ENCODE measurements at regions of chr1 and their contacts with region 1.

Region 1: GRCh38 chr1:48202030-48202752 is 20.3 kb upstream of the SLC5A9 start:
- DNase-seq: peak; percentile 97
- H3K4me3 ChIP-seq: no peak overlapping the region
- H3K27ac ChIP-seq: no peak overlapping the region
- H3K4me1 ChIP-seq: peaks cover 15% of the 10 kb centered on the region
- H3K27me3 ChIP-seq: peaks cover 2% of the 10 kb centered on the region
- CTCF ChIP-seq: peak; percentile 82 to 91

Region 2: GRCh38 chr1:47755101-47755990 is 446.8 kb before region 1 on chr1:
- CTCF ChIA-PET with region 1: no interaction called
- dilution Hi-C with region 1: no loop called
- in situ Hi-C with region 1: loop called in 1 of 2 experiments (anchors 25 kb)
- intact Hi-C with region 1: no loop called
- DNase-seq: no peak
- H3K4me3 ChIP-seq: no peak overlapping the region
- H3K27ac ChIP-seq: no peak overlapping the region
- H3K4me1 ChIP-seq: peaks cover 4% of the 10 kb centered on the region
- H3K27me3 ChIP-seq: no peaks in the 10 kb centered on the region
- CTCF ChIP-seq: peak; percentile 55 to 64

Region 3: GRCh38 chr1:47997289-47998200 is 204.6 kb before region 1 on chr1 and contains the start of gene TRABD2B:
- CTCF ChIA-PET with region 1: no interaction called
- dilution Hi-C with region 1: no loop called
- in situ Hi-C with region 1: no loop called
- intact Hi-C with region 1: loop called (anchors 2 kb)
- DNase-seq: peak; percentile 69
- H3K4me3 ChIP-seq: peak within 1 kb of the TSS; percentile 57 to 75 (median 69)
- H3K27ac ChIP-seq: no peak within 1 kb of the TSS
- H3K4me1 ChIP-seq: peaks cover 23% of the 10 kb centered on the region
- H3K27me3 ChIP-seq: no peaks in the 10 kb centered on the region
- CTCF ChIP-seq: peak; percentile 55 to 96
- total RNA-seq, gene TRABD2B: 1.2 TPM

Region 4: GRCh38 chr1:48082271-48082962 is 119.8 kb before region 1 on chr1:
- CTCF ChIA-PET with region 1: no interaction called
- dilution Hi-C with region 1: no loop called
- in situ Hi-C with region 1: no loop called
- intact Hi-C with region 1: no loop called
- DNase-seq: no peak
- H3K4me3 ChIP-seq: no peak overlapping the region
- H3K27ac ChIP-seq: no peak overlapping the region
- H3K4me1 ChIP-seq: no peaks in the 10 kb centered on the region
- H3K27me3 ChIP-seq: no peaks in the 10 kb centered on the region
- CTCF ChIP-seq: no peak

Region 5: GRCh38 chr1:48109390-48110013 is 92.7 kb before region 1 on chr1:
- CTCF ChIA-PET with region 1: interaction called, 5 read pairs
- dilution Hi-C with region 1: no loop called
- in situ Hi-C with region 1: loop called (anchors 5 kb)
- intact Hi-C with region 1: loop called (anchors 1 kb)
- DNase-seq: peak; percentile 54
- H3K4me3 ChIP-seq: no peak overlapping the region
- H3K27ac ChIP-seq: no peak overlapping the region
- H3K4me1 ChIP-seq: no peaks in the 10 kb centered on the region
- H3K27me3 ChIP-seq: peaks cover 3% of the 10 kb centered on the region
- CTCF ChIP-seq: peak; percentile 94 to 96

Region 6: GRCh38 chr1:48236716-48237470 is 34.7 kb after region 1 on chr1:
- CTCF ChIA-PET with region 1: no interaction called
- dilution Hi-C with region 1: no loop called
- in situ Hi-C with region 1: no loop called
- intact Hi-C with region 1: loop called (anchors 1 kb)
- DNase-seq: peak; percentile 34
- H3K4me3 ChIP-seq: no peak overlapping the region
- H3K27ac ChIP-seq: no peak overlapping the region
- H3K4me1 ChIP-seq: no peaks in the 10 kb centered on the region
- H3K27me3 ChIP-seq: no peaks in the 10 kb centered on the region
- CTCF ChIP-seq: peak; percentile 77 to 86

Region 7: GRCh38 chr1:48263041-48263440 is 60.9 kb after region 1 on chr1:
- CTCF ChIA-PET with region 1: no interaction called
- dilution Hi-C with region 1: no loop called
- in situ Hi-C with region 1: no loop called
- intact Hi-C with region 1: no loop called
- DNase-seq: no peak
- H3K4me3 ChIP-seq: no peak overlapping the region
- H3K27ac ChIP-seq: no peak overlapping the region
- H3K4me1 ChIP-seq: no peaks in the 10 kb centered on the region
- H3K27me3 ChIP-seq: no peaks in the 10 kb centered on the region
- CTCF ChIP-seq: no peak